Naive thymus-derived CD4-positive, alpha-beta T cell (primary cell): ENCODE measurements at regions of chr5 and their contacts with region 1.

Region 1: GRCh38 chr5:157219491-157220271 is 39.0 kb downstream of the ITK start:
- DNase-seq: peak in 1 of 9 donors; percentile 54
- ATAC-seq: no peak
- H3K4me3 ChIP-seq: no peak overlapping the region
- H3K4me3 Mint-ChIP-seq: peak overlapping the region in 9 of 10 donors; percentile 39 to 89 (median 65)
- H3K27ac ChIP-seq: peak overlapping the region; percentile 63
- H3K27ac Mint-ChIP-seq: peak overlapping the region; percentile 89 to 98 (median 94)
- H3K4me1 ChIP-seq: peaks cover 82 to 87% of the 10 kb centered on the region in 2 donors
- H3K4me1 Mint-ChIP-seq: peaks cover 54 to 94% (median 85%) of the 10 kb centered on the region in 7 donors
- H3K27me3 ChIP-seq: no peaks in the 10 kb centered on the region
- H3K27me3 Mint-ChIP-seq: no peaks in the 10 kb centered on the region

Region 2: GRCh38 chr5:157180374-157181264 is 39.1 kb before region 1 on chr5 and contains the start of gene ITK:
- CTCF ChIA-PET with region 1: interaction called, 5 read pairs
- POLR2A ChIA-PET with region 1: interaction called, 85 read pairs
- intact Hi-C with region 1: loop called (anchors 1 kb)
- DNase-seq: peak in 7 of 9 donors; percentile 66 to 84 (median 77)
- ATAC-seq: peak; percentile 88
- H3K4me3 ChIP-seq: peak within 1 kb of the TSS; percentile 62
- H3K4me3 Mint-ChIP-seq: peak within 1 kb of the TSS; percentile 89 to 100 (median 97)
- H3K27ac ChIP-seq: peak within 1 kb of the TSS; percentile 81
- H3K27ac Mint-ChIP-seq: peak within 1 kb of the TSS; percentile 91 to 99 (median 96)
- H3K4me1 ChIP-seq: peaks cover 33 to 42% of the 10 kb centered on the region in 2 donors
- H3K4me1 Mint-ChIP-seq: peaks cover 27 to 61% (median 50%) of the 10 kb centered on the region in 7 donors
- H3K27me3 ChIP-seq: no peaks in the 10 kb centered on the region
- H3K27me3 Mint-ChIP-seq: no peaks in the 10 kb centered on the region
- total RNA-seq, gene ITK: 278 to 481 (median 324) TPM

Region 3: DNA sequence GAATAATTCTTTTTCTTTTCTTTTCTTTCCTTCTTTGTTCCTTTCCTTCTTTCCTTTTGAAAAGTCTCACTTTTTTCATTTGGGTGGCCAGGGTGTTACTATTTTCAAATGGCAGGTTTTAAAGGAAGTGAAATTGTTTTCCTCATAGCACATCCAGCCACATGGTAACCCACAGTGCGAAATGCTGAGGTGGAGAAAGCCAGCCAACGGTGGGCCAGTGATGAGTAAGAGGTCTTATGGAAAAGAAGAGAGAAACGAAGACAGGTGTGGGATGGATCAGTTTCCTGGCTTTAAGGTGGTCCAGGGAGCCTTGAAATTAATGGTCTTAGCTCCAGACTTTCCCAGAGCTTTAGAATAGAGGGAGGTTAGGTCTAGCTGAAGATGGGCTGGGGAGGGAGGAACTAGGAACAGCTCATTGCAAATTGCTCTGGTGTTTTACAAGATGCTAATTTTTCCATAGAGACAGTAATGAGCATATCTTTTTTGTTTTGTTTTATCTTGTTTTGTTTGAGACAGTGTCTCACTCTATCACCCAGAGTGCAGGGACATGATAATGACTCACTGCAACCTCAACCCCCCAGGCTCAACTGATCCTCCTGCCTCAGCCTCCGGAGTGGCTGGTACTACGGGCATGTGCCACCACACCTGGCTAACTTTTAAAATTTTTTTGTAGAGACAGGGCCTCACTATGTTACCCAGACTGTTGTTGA is 21.2 kb before region 1 on chr5:
- CTCF ChIA-PET with region 1: interaction called, 6 read pairs
- POLR2A ChIA-PET with region 1: interaction called, 253 read pairs
- intact Hi-C with region 1: loop called in 1 of 2 experiments (anchors 1 kb)
- DNase-seq: peak in 2 of 9 donors; percentile 58 to 77
- ATAC-seq: peak; percentile 49
- H3K4me3 ChIP-seq: peak overlapping the region; percentile 24
- H3K4me3 Mint-ChIP-seq: peak overlapping the region; percentile 47 to 98 (median 78)
- H3K27ac ChIP-seq: peak overlapping the region; percentile 81
- H3K27ac Mint-ChIP-seq: peak overlapping the region; percentile 78 to 98 (median 87)
- H3K4me1 ChIP-seq: peaks cover 86 to 95% of the 10 kb centered on the region in 2 donors
- H3K4me1 Mint-ChIP-seq: peaks cover 53 to 100% (median 97%) of the 10 kb centered on the region in 7 donors
- H3K27me3 ChIP-seq: no peaks in the 10 kb centered on the region
- H3K27me3 Mint-ChIP-seq: no peaks in the 10 kb centered on the region

Region 4: GRCh38 chr5:157233515-157233914 is 13.8 kb after region 1 on chr5:
- CTCF ChIA-PET with region 1: interaction called, 3 read pairs
- POLR2A ChIA-PET with region 1: interaction called, 8 read pairs
- intact Hi-C with region 1: loop called in 1 of 2 experiments (anchors 1 kb)
- DNase-seq: peak in 7 of 9 donors; percentile 54 to 81 (median 76)
- ATAC-seq: peak; percentile 95
- H3K4me3 ChIP-seq: no peak overlapping the region
- H3K4me3 Mint-ChIP-seq: peak overlapping the region in 5 of 10 donors; percentile 43 to 56 (median 52)
- H3K27ac ChIP-seq: peak overlapping the region; percentile 55
- H3K27ac Mint-ChIP-seq: peak overlapping the region; percentile 24 to 96 (median 85)
- H3K4me1 ChIP-seq: peaks cover 19 to 26% of the 10 kb centered on the region in 2 donors
- H3K4me1 Mint-ChIP-seq: peaks cover 23 to 82% (median 64%) of the 10 kb centered on the region in 7 donors
- H3K27me3 ChIP-seq: no peaks in the 10 kb centered on the region
- H3K27me3 Mint-ChIP-seq: no peaks in the 10 kb centered on the region